Activated CD4-positive, alpha-beta T cell treated with anti-CD3 and anti-CD28 coated beads for 36 hours (primary cell): ENCODE measurements at regions of chr3 and their contacts with region 1.

Region 1: GRCh38 chr3:182792901-182793662 is at the start of gene ATP11B:
- DNase-seq: peak; percentile 85
- ATAC-seq: peak; percentile 43
- H3K4me3 Mint-ChIP-seq: peak within 1 kb of the TSS; percentile 96
- H3K27ac Mint-ChIP-seq: peak within 1 kb of the TSS; percentile 99
- H3K4me1 Mint-ChIP-seq: peaks cover 27% of the 10 kb centered on the region
- H3K27me3 Mint-ChIP-seq: no peaks in the 10 kb centered on the region
- total RNA-seq, gene ATP11B: 64.6 to 86.7 TPM

Region 2: DNA sequence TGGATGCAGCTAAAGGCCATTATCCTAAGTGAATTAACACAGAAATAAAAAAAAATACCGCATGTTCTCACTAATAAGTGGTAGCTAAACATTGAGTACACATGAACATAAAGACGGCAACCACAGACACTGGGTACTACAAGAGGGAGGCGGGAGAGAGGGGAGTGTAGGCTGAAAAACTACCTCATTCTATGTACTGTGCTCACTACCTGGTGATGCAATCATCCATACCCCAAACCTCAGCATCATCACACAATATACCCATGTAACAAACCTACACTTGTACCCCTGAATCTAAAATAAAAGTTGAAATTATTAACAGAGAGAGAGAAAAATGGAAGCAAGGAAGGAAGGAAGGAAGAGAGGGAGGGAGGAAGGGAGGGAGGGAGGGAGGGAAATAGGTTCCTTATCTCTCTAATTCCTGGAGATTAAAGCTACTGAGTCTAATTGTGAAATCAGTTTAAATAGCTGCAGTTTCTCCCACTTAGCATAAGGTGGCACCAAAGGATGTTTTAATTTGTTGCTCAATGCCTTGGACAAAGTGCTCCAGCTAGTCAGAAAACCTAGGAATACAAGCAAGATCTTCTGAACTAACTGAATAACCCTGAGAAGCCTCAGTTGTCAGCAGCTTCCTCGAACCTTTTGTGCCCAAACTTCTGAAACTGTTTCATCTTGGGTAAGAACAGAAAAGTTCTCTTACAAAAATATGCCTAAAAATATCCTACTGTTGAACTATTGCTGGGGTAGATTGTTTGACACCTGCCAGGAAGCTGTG is 79.2 kb before region 1 on chr3:
- CTCF ChIA-PET with region 1: interaction called, 10 read pairs
- POLR2A ChIA-PET with region 1: no interaction called
- intact Hi-C with region 1: no loop called
- DNase-seq: no peak
- ATAC-seq: peak; percentile 66
- H3K4me3 Mint-ChIP-seq: no peak overlapping the region
- H3K27ac Mint-ChIP-seq: no peak overlapping the region
- H3K4me1 Mint-ChIP-seq: peaks cover 8% of the 10 kb centered on the region
- H3K27me3 Mint-ChIP-seq: peaks cover 3% of the 10 kb centered on the region

Region 3: DNA sequence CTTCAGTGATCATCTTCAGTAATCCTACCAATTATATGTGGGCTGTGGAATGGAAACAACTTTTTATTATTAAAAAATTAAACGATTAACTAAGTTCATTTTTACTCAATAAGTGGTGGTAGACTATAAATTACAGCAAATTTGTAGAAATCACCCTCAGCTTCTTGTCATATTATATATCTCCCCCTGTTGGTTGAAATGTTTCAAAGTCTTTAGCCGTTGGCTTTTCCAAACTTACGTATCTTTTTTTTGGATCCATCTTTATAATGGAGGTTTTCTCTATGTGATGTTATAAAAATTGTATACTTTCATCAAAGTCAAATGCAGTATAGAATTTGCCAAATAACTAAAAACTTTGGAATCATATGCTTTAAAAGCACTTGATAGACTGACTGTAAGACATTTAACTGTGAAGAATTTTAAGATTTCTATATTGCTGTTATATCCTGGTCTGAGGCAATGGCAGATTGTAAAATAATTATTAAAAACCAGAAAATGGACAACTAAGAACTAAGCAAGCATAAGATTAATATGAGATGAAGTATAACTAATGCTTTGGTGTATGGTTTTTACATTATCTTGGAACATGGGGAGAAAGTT is 44.9 kb after region 1 on chr3:
- CTCF ChIA-PET with region 1: interaction called, 3 read pairs
- POLR2A ChIA-PET with region 1: no interaction called
- intact Hi-C with region 1: loop called in 1 of 2 experiments (anchors 5 kb)
- DNase-seq: no peak
- ATAC-seq: no peak
- H3K4me3 Mint-ChIP-seq: no peak overlapping the region
- H3K27ac Mint-ChIP-seq: no peak overlapping the region
- H3K4me1 Mint-ChIP-seq: peaks cover 6% of the 10 kb centered on the region
- H3K27me3 Mint-ChIP-seq: no peaks in the 10 kb centered on the region

Region 4: DNA sequence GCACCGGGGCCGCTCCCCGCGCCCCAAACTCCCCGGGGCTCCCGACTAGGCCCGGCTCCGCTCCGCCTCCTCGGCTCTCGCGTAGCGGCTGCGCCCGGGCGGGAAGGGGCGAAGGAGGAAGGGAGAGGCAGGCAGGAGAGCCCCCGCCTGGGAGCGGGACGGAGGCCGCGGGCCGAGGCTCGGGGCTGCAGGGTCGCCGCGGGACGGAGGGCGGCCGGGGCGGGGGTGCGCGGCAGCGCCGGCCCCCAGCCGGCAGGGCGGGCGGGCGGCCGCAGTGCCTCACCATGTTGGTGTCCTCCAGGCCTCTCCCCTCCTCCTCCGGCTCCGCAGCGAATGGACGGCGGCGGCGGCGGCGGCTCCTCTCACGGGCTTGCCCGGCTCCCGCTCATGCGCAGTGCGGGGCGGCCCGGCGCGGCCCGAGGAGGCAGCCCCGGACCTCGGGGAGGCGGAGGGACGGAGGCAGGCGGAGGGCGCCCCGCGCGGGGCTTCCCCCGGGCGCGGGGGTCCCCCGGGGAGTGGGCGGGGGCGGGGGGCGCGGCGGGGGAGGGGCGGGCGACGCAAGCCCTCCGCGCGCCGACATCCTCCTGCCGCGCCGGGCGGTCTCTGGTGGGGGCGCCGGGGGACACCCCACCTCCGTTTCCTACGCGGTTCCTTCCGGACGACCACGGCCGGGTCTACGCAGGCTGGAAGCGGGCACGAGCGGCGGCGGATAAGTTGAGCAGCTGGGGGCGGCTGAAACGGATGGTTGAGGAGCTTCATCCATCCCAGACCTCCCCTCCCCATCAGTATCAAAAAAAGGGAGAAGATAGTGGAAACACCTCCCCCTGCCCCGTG is 187.3 kb after region 1 on chr3 and contains the start of gene DCUN1D1:
- CTCF ChIA-PET with region 1: no interaction called
- POLR2A ChIA-PET with region 1: no interaction called
- intact Hi-C with region 1: loop called in 1 of 2 experiments (anchors 1 kb)
- DNase-seq: peak; percentile 93
- ATAC-seq: peak; percentile 94
- H3K4me3 Mint-ChIP-seq: peak within 1 kb of the TSS; percentile 95
- H3K27ac Mint-ChIP-seq: peak within 1 kb of the TSS; percentile 92
- H3K4me1 Mint-ChIP-seq: peaks cover 25% of the 10 kb centered on the region
- H3K27me3 Mint-ChIP-seq: no peaks in the 10 kb centered on the region
- total RNA-seq, gene DCUN1D1: 40.0 to 52.9 TPM

Region 5: GRCh38 chr3:184017672-184018423 is 1224.8 kb after region 1 on chr3 and contains the start of gene ABCC5:
- CTCF ChIA-PET with region 1: no interaction called
- POLR2A ChIA-PET with region 1: no interaction called
- intact Hi-C with region 1: loop called in 1 of 2 experiments (anchors 5 kb)
- DNase-seq: peak; percentile 91
- ATAC-seq: peak; percentile 96
- H3K4me3 Mint-ChIP-seq: peak within 1 kb of the TSS; percentile 98
- H3K27ac Mint-ChIP-seq: peak within 1 kb of the TSS; percentile 85
- H3K4me1 Mint-ChIP-seq: peaks cover 17% of the 10 kb centered on the region
- H3K27me3 Mint-ChIP-seq: peaks cover 9% of the 10 kb centered on the region
- total RNA-seq, gene ABCC5: 12.5 to 15.8 TPM